ENCODE measurements at regions of chr4 and their contacts with region 1.

Region 1: GRCh38 chr4:145936142-145936996 is 2.3 kb downstream of the ZNF827 start:
- DNase-seq: peak; percentile 40
- ATAC-seq: peak; percentile 56
- H3K4me3 ChIP-seq: peak overlapping the region; percentile 64 to 96 (median 85)
- H3K27ac ChIP-seq: peak overlapping the region; percentile 64
- H3K4me1 ChIP-seq: peaks cover 26% of the 10 kb centered on the region
- H3K27me3 ChIP-seq: no peaks in the 10 kb centered on the region; a peak in 1 of 5 replicates
- CTCF ChIP-seq: no peak
- EP300 ChIP-seq: no peak
- POLR2A ChIP-seq: 0 out of 4 replicates have a peak, but pooled peaks of 1 of the 2 experiments have one; percentile 11
- RAD21 ChIP-seq: no peak

Region 2: GRCh38 chr4:145732895-145733880 is 203.2 kb before region 1 on chr4:
- CTCF ChIA-PET with region 1: no interaction called
- POLR2A ChIA-PET with region 1: no interaction called
- in situ Hi-C with region 1: loop called (anchors 10 kb)
- intact Hi-C with region 1: loop called (anchors 1 kb)
- DNase-seq: peak; percentile 53
- ATAC-seq: peak; percentile 83
- H3K4me3 ChIP-seq: peak overlapping the region; percentile 59 to 73 (median 60); a peak in 5 of 6 replicates
- H3K27ac ChIP-seq: no peak overlapping the region
- H3K4me1 ChIP-seq: peaks cover 16% of the 10 kb centered on the region
- H3K27me3 ChIP-seq: peaks cover 0 to 38% of the 10 kb centered on the region in 2 experiments; a peak in 3 of 5 replicates
- CTCF ChIP-seq: no peak
- EP300 ChIP-seq: no peak
- POLR2A ChIP-seq: no peak
- RAD21 ChIP-seq: no peak

Region 3: DNA sequence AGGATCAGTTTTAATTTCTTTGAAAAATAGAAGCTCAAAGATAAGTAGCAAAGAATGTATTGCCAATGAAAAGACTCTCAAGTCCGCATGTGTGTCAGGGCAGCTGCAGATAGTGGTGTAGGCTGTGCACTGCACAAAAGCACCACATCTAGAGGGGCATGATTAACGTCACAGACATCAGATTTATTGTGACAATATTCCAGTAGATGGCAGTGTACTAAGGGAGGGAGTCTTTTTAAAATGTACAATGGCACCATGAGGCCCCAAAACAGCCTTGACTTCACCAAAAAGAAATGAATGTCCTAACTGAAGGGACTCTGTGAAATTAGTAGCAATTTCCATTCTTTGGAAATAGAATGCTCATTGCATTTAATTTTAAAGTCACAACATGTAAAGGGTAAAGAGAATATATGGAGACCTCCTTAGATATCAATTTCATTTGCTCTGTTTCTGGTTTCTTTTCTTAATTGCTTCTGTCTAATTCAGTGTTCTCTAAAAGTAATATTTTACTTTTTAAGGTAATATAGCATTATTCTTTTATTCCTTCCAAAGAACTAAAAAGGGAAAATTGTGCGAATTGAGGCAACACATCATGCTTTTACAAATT is 96.1 kb before region 1 on chr4:
- CTCF ChIA-PET with region 1: no interaction called
- POLR2A ChIA-PET with region 1: no interaction called
- in situ Hi-C with region 1: no loop called
- intact Hi-C with region 1: loop called (anchors 1 kb)
- DNase-seq: peak; percentile 45
- ATAC-seq: peak; percentile 94
- H3K4me3 ChIP-seq: no peak overlapping the region
- H3K27ac ChIP-seq: no peak overlapping the region
- H3K4me1 ChIP-seq: no peaks in the 10 kb centered on the region
- H3K27me3 ChIP-seq: no peaks in the 10 kb centered on the region
- CTCF ChIP-seq: peak; percentile 45; the same call in 1 of the 2 replicates
- EP300 ChIP-seq: no peak
- POLR2A ChIP-seq: no peak
- RAD21 ChIP-seq: no peak; the same call in 1 of the 2 replicates

Region 4: GRCh38 chr4:145891958-145892357 is 44.4 kb before region 1 on chr4:
- CTCF ChIA-PET with region 1: no interaction called
- POLR2A ChIA-PET with region 1: no interaction called
- in situ Hi-C with region 1: no loop called
- intact Hi-C with region 1: loop called (anchors 5 kb)
- DNase-seq: no peak
- ATAC-seq: peak; percentile 64
- H3K4me3 ChIP-seq: no peak overlapping the region
- H3K27ac ChIP-seq: no peak overlapping the region
- H3K4me1 ChIP-seq: no peaks in the 10 kb centered on the region
- H3K27me3 ChIP-seq: no peaks in the 10 kb centered on the region
- CTCF ChIP-seq: no peak; the same call in 1 of the 2 replicates
- EP300 ChIP-seq: no peak
- POLR2A ChIP-seq: no peak
- RAD21 ChIP-seq: no peak

Measured in HepG2 (cell line).